ENCODE measurements at regions of chr19 and their contacts with region 1.

Region 1: GRCh38 chr19:3683405-3684053 is 16.7 kb downstream of the PIP5K1C start:
- DNase-seq: peak; percentile 92
- H3K4me3 ChIP-seq: no peak overlapping the region
- H3K27ac ChIP-seq: peak overlapping the region; percentile 90
- H3K4me1 ChIP-seq: peaks cover 15% of the 10 kb centered on the region
- H3K27me3 ChIP-seq: no peaks in the 10 kb centered on the region
- CTCF ChIP-seq: no peak
- POLR2A ChIP-seq: no peak

Region 2: DNA sequence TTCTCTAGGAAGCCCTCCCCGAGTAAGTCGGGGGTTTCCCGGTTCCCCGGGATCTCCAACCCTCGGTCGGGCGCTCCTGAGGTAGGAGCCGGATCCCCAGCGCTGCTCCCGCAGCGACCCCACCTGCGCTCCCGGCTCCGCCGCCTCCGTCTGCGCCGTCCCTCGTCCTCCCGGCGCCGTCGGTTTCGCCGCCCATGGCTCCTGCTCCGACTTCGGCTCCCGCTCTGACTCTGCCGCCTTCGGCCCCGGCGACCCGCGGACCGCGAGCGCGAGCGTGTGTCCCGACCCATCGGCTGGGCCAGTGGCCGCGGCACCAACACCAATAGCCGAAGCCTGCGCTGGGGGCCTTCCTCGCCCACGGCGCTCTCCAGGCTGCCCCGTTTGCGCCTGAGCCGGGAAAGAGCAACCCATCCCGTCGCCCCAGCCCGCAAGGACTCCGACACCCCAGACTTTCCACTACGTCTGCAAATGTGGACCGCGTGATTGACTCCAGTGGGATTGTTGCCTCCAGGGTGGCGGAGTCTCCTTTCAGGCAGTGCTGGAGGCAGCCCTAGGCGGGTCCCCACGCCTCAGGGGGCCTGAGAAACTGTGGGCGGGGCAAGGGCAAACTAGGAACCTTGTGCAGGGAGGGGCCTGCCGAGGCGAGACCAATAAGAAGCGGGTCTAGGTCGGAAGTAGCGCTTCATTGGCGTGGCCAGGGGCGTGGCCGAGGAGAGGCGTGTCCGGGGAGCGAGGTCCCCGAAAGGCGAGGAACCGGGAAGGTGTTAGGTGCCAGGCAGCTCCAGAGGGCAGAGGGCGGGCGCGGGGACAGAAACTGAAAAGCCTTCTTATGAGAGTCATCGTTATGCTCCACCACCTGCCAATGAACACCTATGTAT is 56.8 kb before region 1 on chr19 and contains the start of gene CACTIN:
- CTCF ChIA-PET with region 1: no interaction called
- POLR2A ChIA-PET with region 1: no interaction called
- dilution Hi-C with region 1: no loop called
- intact Hi-C with region 1: no loop called
- DNase-seq: peak; percentile 97
- H3K4me3 ChIP-seq: peak within 1 kb of the TSS; percentile 70 to 94 (median 88)
- H3K27ac ChIP-seq: peak within 1 kb of the TSS; percentile 93
- H3K4me1 ChIP-seq: peaks cover 14% of the 10 kb centered on the region
- H3K27me3 ChIP-seq: no peaks in the 10 kb centered on the region
- CTCF ChIP-seq: no peak
- POLR2A ChIP-seq: peak; percentile 77
- total RNA-seq, gene CACTIN: 36.1 and 36.4 TPM in 2 replicates

Region 3: DNA sequence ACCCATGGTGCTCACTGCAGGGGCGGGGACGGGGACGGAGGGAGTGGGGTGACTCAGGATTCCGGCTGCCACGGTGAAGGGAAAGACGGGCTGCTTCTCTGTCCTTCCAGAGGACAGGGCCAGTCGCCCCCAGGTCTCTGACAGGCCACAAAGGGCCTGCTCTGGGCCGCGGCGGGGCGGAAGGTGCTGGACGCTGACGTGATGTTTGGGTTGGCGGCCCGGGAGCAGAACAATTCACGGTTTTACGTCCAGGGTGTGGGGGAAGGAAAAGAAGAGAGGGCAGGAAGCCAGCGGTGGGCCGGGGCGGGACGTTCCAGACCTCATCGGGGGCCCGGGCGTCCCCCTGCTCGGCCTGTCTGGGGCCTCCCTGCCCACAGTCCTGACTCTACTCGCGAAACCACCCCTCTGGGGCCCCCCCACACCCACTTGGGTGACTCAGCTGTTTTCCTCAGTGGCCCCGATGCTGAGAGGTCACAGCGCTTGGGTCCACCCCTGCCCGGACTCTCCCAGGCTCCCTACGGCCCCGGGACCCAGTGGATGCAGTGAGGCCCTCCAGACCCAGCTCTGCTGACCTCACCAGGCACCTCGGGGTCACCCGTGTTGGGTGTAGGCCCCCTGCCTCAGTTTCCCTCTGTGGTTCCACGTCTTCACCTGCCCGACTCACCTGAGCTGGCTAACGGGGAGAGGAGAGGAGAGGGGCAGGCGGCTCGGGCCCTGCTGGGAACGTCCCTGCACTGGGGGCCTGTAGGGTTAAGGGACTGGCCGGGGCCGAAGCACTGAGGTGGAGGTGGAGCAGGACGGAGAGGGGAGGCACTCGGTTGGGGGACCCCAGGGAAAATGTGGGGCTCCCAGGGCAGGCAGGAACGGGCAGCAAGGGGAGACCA is 12.5 kb before region 1 on chr19:
- CTCF ChIA-PET with region 1: interaction called, 10 read pairs
- POLR2A ChIA-PET with region 1: interaction called, 8 read pairs
- dilution Hi-C with region 1: no loop called
- intact Hi-C with region 1: loop called (anchors 1 kb)
- DNase-seq: peak; percentile 84
- H3K4me3 ChIP-seq: peak overlapping the region in 2 of 3 experiments; percentile 4 to 15
- H3K27ac ChIP-seq: peak overlapping the region; percentile 98
- H3K4me1 ChIP-seq: peaks cover 28% of the 10 kb centered on the region
- H3K27me3 ChIP-seq: no peaks in the 10 kb centered on the region
- CTCF ChIP-seq: no peak
- POLR2A ChIP-seq: peak; percentile 45

Measured in endothelial cell of umbilical vein (primary cell).